ENCODE measurements at regions of chr2 and their contacts with region 1.

Region 1: GRCh38 chr2:85551698-85552678 is 9.3 kb downstream of the GGCX start:
- DNase-seq: peak; percentile 70 to 92 (median 88)
- ATAC-seq: peak; percentile 97
- H3K4me3 ChIP-seq: no peak overlapping the region
- H3K4me3 Mint-ChIP-seq: no peak overlapping the region
- H3K27ac ChIP-seq: no peak overlapping the region
- H3K27ac Mint-ChIP-seq: peak overlapping the region in 5 of 9 donors; percentile 12 to 62 (median 38)
- H3K4me1 ChIP-seq: no peaks in the 10 kb centered on the region
- H3K4me1 Mint-ChIP-seq: peaks cover 0 to 10% (median 6%) of the 10 kb centered on the region in 7 donors
- H3K27me3 ChIP-seq: no peaks in the 10 kb centered on the region
- H3K27me3 Mint-ChIP-seq: no peaks in the 10 kb centered on the region

Region 2: DNA sequence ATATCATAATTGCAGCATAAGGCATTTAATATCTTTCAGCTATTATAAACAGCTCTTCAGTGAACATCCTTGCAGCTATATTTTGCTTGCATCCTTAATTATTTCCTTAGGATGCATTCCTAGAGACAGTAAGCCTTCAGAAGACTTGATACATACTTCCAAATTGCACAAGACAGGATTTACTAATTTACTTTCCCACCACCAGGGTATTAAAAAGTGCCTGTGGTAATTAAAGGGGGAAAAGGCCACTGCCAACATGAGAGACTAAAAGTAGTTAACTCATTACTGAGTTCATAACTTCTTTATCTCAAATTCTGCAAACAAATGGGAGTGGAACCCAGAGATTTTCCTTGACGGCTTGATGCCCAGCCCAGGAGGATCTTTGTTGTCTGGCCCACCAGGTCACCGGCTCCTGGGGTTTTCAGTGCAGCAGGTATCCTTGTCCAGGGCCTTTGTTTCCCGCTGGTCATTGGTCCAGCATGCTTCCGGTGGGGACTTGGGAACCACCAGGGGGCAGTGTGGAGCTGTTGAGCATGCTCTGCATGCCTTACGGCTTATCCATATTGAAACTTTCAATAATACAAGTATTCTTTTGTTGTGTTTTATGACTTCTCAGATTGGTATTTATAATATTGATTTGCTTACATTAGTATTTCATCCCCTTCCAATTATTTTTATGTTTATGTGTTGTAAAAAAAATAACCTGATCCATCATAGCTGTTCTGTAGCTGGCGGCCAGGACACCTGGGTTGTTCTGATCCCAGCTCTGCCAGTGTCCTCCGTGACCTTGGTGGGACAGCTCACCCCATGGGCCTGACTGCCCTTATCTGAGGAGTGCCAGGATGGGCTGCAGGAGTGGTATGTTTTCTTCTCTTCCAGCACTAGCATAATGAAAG is 285.6 kb before region 1 on chr2:
- CTCF ChIA-PET with region 1: interaction called, 3 read pairs
- POLR2A ChIA-PET with region 1: no interaction called
- intact Hi-C with region 1: loop called in 1 of 2 experiments (anchors 1 kb)
- DNase-seq: peak; percentile 27 to 76 (median 48)
- ATAC-seq: peak; percentile 78
- H3K4me3 ChIP-seq: no peak overlapping the region
- H3K4me3 Mint-ChIP-seq: no peak overlapping the region
- H3K27ac ChIP-seq: no peak overlapping the region
- H3K27ac Mint-ChIP-seq: peak overlapping the region in 1 of 9 donors; percentile 21
- H3K4me1 ChIP-seq: no peaks in the 10 kb centered on the region
- H3K4me1 Mint-ChIP-seq: peaks cover 0 to 2% (median 0%) of the 10 kb centered on the region in 7 donors
- H3K27me3 ChIP-seq: no peaks in the 10 kb centered on the region
- H3K27me3 Mint-ChIP-seq: peaks cover 0 to 26% (median 0%) of the 10 kb centered on the region in 5 donors

Region 3: GRCh38 chr2:85308896-85309555 is 243.0 kb before region 1 on chr2:
- CTCF ChIA-PET with region 1: no interaction called
- POLR2A ChIA-PET with region 1: no interaction called
- intact Hi-C with region 1: loop called in 1 of 2 experiments (anchors 5 kb)
- DNase-seq: peak in 2 of 9 donors; percentile 16 to 18
- ATAC-seq: peak; percentile 8
- H3K4me3 ChIP-seq: peak overlapping the region; percentile 57
- H3K4me3 Mint-ChIP-seq: peak overlapping the region; percentile 23 to 93 (median 86)
- H3K27ac ChIP-seq: peak overlapping the region; percentile 67
- H3K27ac Mint-ChIP-seq: peak overlapping the region; percentile 43 to 98 (median 95)
- H3K4me1 ChIP-seq: peaks cover 11 to 31% of the 10 kb centered on the region in 2 donors
- H3K4me1 Mint-ChIP-seq: peaks cover 26 to 56% (median 48%) of the 10 kb centered on the region in 7 donors
- H3K27me3 ChIP-seq: no peaks in the 10 kb centered on the region
- H3K27me3 Mint-ChIP-seq: peaks cover 0 to 8% (median 0%) of the 10 kb centered on the region in 5 donors

Region 4: GRCh38 chr2:85390941-85391669 is 160.9 kb before region 1 on chr2:
- CTCF ChIA-PET with region 1: interaction called, 90 read pairs
- POLR2A ChIA-PET with region 1: interaction called, 3 read pairs
- intact Hi-C with region 1: loop called in 1 of 2 experiments (anchors 1 kb)
- DNase-seq: peak; percentile 52 to 79 (median 71)
- ATAC-seq: peak; percentile 76
- H3K4me3 ChIP-seq: no peak overlapping the region
- H3K4me3 Mint-ChIP-seq: no peak overlapping the region
- H3K27ac ChIP-seq: no peak overlapping the region
- H3K27ac Mint-ChIP-seq: peak overlapping the region in 5 of 9 donors; percentile 9 to 65 (median 38)
- H3K4me1 ChIP-seq: peaks cover 0 to 11% of the 10 kb centered on the region in 2 donors
- H3K4me1 Mint-ChIP-seq: peaks cover 5 to 27% (median 15%) of the 10 kb centered on the region in 7 donors
- H3K27me3 ChIP-seq: no peaks in the 10 kb centered on the region
- H3K27me3 Mint-ChIP-seq: no peaks in the 10 kb centered on the region

Region 5: GRCh38 chr2:85457877-85458316 is 94.1 kb before region 1 on chr2:
- CTCF ChIA-PET with region 1: no interaction called
- POLR2A ChIA-PET with region 1: no interaction called
- intact Hi-C with region 1: no loop called
- DNase-seq: no peak
- ATAC-seq: no peak
- H3K4me3 ChIP-seq: no peak overlapping the region
- H3K4me3 Mint-ChIP-seq: no peak overlapping the region
- H3K27ac ChIP-seq: no peak overlapping the region
- H3K27ac Mint-ChIP-seq: no peak overlapping the region
- H3K4me1 ChIP-seq: no peaks in the 10 kb centered on the region
- H3K4me1 Mint-ChIP-seq: peaks cover 0 to 2% (median 0%) of the 10 kb centered on the region in 7 donors
- H3K27me3 ChIP-seq: no peaks in the 10 kb centered on the region
- H3K27me3 Mint-ChIP-seq: peaks cover 0 to 14% (median 0%) of the 10 kb centered on the region in 5 donors

Region 6: GRCh38 chr2:85707304-85707703 is 155.3 kb after region 1 on chr2:
- CTCF ChIA-PET with region 1: no interaction called
- POLR2A ChIA-PET with region 1: no interaction called
- intact Hi-C with region 1: loop called in 1 of 2 experiments (anchors 1 kb)
- DNase-seq: peak in 8 of 9 donors; percentile 38 to 75 (median 66)
- ATAC-seq: peak; percentile 85
- H3K4me3 ChIP-seq: no peak overlapping the region
- H3K4me3 Mint-ChIP-seq: peak overlapping the region in 1 of 10 donors; percentile 6
- H3K27ac ChIP-seq: no peak overlapping the region
- H3K27ac Mint-ChIP-seq: peak overlapping the region in 1 of 9 donors; percentile 90
- H3K4me1 ChIP-seq: peaks cover 0 to 25% of the 10 kb centered on the region in 2 donors
- H3K4me1 Mint-ChIP-seq: peaks cover 0 to 74% (median 5%) of the 10 kb centered on the region in 7 donors
- H3K27me3 ChIP-seq: peaks cover 0 to 4% of the 10 kb centered on the region in 2 donors
- H3K27me3 Mint-ChIP-seq: peaks cover 0 to 7% (median 4%) of the 10 kb centered on the region in 5 donors

Measured in naive thymus-derived CD4-positive, alpha-beta T cell (primary cell).